ENCODE measurements at regions of chr15 and their contacts with region 1.

Region 1: GRCh38 chr15:63544258-63545026 is 40.0 kb downstream of the USP3 start:
- DNase-seq: no peak
- H3K4me3 ChIP-seq: no peak overlapping the region
- H3K4me3 Mint-ChIP-seq: peak overlapping the region in 5 of 8 donors; percentile 51 to 58 (median 52)
- H3K27ac ChIP-seq: no peak overlapping the region
- H3K27ac Mint-ChIP-seq: peak overlapping the region; percentile 4 to 81 (median 58)
- H3K4me1 ChIP-seq: peaks cover 29% of the 10 kb centered on the region
- H3K4me1 Mint-ChIP-seq: peaks cover 40 to 69% (median 47%) of the 10 kb centered on the region in 4 donors
- H3K27me3 ChIP-seq: no peaks in the 10 kb centered on the region
- H3K27me3 Mint-ChIP-seq: no peaks in the 10 kb centered on the region

Region 2: DNA sequence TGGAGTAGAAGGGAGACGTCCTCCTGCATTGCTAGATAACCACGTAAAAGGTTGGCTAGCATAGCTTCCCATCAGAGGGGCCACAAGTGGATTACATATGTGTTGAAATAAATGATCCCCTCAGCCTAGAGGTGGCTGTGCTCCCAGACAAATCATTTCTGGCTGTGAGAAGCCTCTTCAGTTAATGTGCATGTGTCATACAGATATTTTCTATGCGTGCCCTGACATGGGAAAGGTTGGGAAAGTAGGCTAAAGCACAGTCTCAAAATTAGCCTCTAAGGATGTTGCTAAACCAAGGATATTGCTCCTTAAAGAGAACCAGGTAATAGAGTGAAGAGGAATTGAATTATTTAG is 22.2 kb before region 1 on chr15:
- CTCF ChIA-PET with region 1: interaction called, 3 read pairs
- POLR2A ChIA-PET with region 1: no interaction called
- intact Hi-C with region 1: loop called (anchors 2 kb)
- DNase-seq: no peak
- H3K4me3 ChIP-seq: no peak overlapping the region
- H3K4me3 Mint-ChIP-seq: peak overlapping the region in 6 of 8 donors; percentile 6 to 78 (median 60)
- H3K27ac ChIP-seq: no peak overlapping the region
- H3K27ac Mint-ChIP-seq: peak overlapping the region in 4 of 7 donors; percentile 30 to 83 (median 35)
- H3K4me1 ChIP-seq: peaks cover 98% of the 10 kb centered on the region
- H3K4me1 Mint-ChIP-seq: peaks cover 73 to 98% (median 87%) of the 10 kb centered on the region in 4 donors
- H3K27me3 ChIP-seq: no peaks in the 10 kb centered on the region
- H3K27me3 Mint-ChIP-seq: no peaks in the 10 kb centered on the region

Measured in CD4-positive, alpha-beta memory T cell (primary cell).